ENCODE measurements at regions of chr11 and their contacts with region 1.

Region 1: DNA sequence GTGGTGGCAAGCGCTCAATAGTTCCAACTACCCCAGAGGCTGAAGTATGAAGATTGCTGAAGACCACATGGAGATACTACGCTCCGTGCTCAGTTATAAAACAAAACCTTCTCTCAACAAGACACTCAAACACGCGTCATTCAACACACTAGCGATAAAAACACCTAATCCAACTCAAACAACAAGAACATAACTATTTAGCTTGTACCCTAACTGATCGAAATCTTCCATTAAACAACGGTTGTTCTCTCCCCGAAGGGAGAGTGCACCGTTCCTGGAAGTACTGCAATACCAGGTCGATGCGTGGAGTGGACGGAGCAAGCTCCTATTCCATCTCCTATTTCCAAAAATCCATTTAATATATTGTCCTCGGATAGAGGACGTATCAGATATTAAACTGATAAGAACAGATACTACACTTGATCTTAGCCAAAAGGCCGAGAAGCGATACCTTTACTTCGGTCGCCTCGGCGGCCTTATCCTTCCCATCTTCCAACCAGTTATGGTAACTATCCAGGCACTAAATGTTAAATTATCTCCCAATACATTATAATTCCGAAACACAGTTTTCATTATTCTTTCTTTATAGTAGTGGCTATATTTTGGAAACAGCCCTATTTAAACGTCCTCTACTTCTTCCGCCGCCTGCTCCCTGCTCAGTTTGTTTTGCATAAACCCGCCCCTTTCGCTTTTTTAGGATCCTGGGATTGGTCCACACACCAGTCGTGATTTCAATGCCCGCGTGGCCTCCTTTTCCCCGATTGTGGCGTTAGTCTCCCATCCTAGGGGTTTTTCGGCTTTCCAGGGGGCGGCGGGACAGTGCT is 2.2 kb upstream of the WDR74 start:
- DNase-seq: peak; percentile 100
- ATAC-seq: peak; percentile 75
- H3K4me3 ChIP-seq: peak overlapping the region; percentile 26
- H3K27ac ChIP-seq: peak overlapping the region; percentile 97
- H3K4me1 ChIP-seq: peaks cover 8% of the 10 kb centered on the region
- H3K27me3 ChIP-seq: no peaks in the 10 kb centered on the region
- CTCF ChIP-seq: no peak
- POLR2A ChIP-seq: peak; percentile 99
- RAD21 ChIP-seq: no peak

Region 2: GRCh38 chr11:62855571-62856332 is 14.2 kb after region 1 on chr11:
- CTCF ChIA-PET with region 1: interaction called, 3 read pairs
- POLR2A ChIA-PET with region 1: interaction called, 14 read pairs
- dilution Hi-C with region 1: no loop called
- in situ Hi-C with region 1: no loop called
- intact Hi-C with region 1: no loop called
- DNase-seq: peak; percentile 98
- ATAC-seq: peak; percentile 94
- H3K4me3 ChIP-seq: peak overlapping the region; percentile 72
- H3K27ac ChIP-seq: peak overlapping the region; percentile 89
- H3K4me1 ChIP-seq: peaks cover 2% of the 10 kb centered on the region; the same call in 1 of the 2 replicates
- H3K27me3 ChIP-seq: no peaks in the 10 kb centered on the region
- CTCF ChIP-seq: no peak
- POLR2A ChIP-seq: peak; percentile 100
- RAD21 ChIP-seq: no peak

Region 3: GRCh38 chr11:62860835-62861563 is 19.4 kb after region 1 on chr11:
- CTCF ChIA-PET with region 1: no interaction called
- POLR2A ChIA-PET with region 1: interaction called, 14 read pairs
- dilution Hi-C with region 1: no loop called
- in situ Hi-C with region 1: no loop called
- intact Hi-C with region 1: loop called (anchors 2 kb)
- DNase-seq: no peak
- ATAC-seq: no peak
- H3K4me3 ChIP-seq: no peak overlapping the region
- H3K27ac ChIP-seq: no peak overlapping the region
- H3K4me1 ChIP-seq: no peaks in the 10 kb centered on the region
- H3K27me3 ChIP-seq: no peaks in the 10 kb centered on the region
- CTCF ChIP-seq: no peak
- POLR2A ChIP-seq: no peak
- RAD21 ChIP-seq: no peak

Region 4: GRCh38 chr11:62880803-62881578 is 39.4 kb after region 1 on chr11 and contains the start of gene SLC3A2:
- CTCF ChIA-PET with region 1: no interaction called
- POLR2A ChIA-PET with region 1: interaction called, 6 read pairs
- dilution Hi-C with region 1: no loop called
- in situ Hi-C with region 1: no loop called
- intact Hi-C with region 1: loop called (anchors 1 kb)
- DNase-seq: peak; percentile 82
- ATAC-seq: peak; percentile 85
- H3K4me3 ChIP-seq: peak within 1 kb of the TSS; percentile 92
- H3K27ac ChIP-seq: peak within 1 kb of the TSS; percentile 98
- H3K4me1 ChIP-seq: peaks cover 23% of the 10 kb centered on the region
- H3K27me3 ChIP-seq: no peaks in the 10 kb centered on the region
- CTCF ChIP-seq: peak; percentile 71
- POLR2A ChIP-seq: peak; percentile 97
- RAD21 ChIP-seq: peak; percentile 61
- total RNA-seq, gene SLC3A2: 114 and 140 TPM in 2 replicates